GM13977 (cell line): ENCODE measurements at regions of chr4 and their contacts with region 1.

Region 1: DNA sequence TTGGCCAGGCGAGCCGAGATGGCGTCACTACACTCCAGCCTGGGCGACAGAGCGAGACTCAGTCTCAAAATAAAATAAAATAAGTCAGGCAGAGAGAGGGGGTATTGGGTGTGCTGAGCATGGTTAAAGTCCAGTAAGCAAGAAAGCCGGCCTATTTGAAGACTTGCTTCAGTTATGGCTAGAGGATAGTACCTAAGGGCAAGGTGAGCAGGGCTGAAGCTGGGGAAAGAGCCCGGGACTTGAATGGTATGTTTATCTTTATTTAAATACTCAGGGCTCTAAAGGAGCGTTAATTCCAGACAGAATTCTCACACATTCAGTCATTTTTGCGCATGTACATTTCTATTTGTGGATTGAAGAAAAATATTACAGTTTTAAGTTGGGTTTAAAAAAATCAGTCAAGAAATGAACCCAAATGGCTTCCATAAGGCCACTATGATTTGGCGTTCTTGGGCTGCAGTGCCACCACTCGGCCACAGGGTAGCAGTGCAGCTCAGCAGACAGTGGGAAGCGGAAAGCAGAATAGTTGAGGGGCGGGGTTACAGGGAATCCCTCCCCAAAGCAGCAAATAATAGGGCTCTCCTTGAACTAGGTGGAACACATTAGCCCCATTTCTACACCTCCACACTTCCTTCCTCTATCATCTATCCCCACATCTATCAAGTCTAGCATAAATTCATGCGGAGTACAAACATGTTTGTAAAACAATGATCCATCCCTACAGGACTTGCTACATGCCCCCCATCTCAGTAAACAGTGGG is 37.2 kb upstream of the SH3D19 start:
- DNase-seq: peak; percentile 80
- CTCF ChIP-seq: peak; percentile 98

Region 2: GRCh38 chr4:151540728-151541422 is 178.3 kb after region 1 on chr4:
- in situ Hi-C with region 1: no loop called
- DNase-seq: no peak
- CTCF ChIP-seq: no peak

Region 3: DNA sequence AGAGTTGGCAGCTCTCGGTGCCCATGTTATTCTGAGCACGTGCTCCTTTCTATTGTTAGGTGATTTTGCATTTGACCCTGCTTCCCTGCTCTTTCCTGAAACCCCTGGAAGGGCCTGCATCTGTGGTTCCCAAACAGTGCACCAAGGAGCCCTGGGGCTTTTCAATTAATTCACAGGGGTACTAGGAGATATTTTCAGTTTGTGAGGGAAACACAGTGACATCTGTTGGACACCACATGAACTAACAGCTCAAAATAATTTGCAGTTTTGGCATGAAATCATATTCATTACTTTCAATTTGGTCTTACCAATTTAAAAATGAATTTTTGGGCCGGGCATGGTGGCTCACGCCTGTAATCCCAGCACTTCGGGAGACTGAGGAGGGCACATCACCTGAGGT is 241.7 kb after region 1 on chr4:
- in situ Hi-C with region 1: loop called (anchors 25 kb)
- DNase-seq: peak; percentile 16
- CTCF ChIP-seq: peak; percentile 47